Sigmoid colon (tissue), 7 donors: ENCODE measurements at regions of chr2 and their contacts with region 1.

Region 1: DNA sequence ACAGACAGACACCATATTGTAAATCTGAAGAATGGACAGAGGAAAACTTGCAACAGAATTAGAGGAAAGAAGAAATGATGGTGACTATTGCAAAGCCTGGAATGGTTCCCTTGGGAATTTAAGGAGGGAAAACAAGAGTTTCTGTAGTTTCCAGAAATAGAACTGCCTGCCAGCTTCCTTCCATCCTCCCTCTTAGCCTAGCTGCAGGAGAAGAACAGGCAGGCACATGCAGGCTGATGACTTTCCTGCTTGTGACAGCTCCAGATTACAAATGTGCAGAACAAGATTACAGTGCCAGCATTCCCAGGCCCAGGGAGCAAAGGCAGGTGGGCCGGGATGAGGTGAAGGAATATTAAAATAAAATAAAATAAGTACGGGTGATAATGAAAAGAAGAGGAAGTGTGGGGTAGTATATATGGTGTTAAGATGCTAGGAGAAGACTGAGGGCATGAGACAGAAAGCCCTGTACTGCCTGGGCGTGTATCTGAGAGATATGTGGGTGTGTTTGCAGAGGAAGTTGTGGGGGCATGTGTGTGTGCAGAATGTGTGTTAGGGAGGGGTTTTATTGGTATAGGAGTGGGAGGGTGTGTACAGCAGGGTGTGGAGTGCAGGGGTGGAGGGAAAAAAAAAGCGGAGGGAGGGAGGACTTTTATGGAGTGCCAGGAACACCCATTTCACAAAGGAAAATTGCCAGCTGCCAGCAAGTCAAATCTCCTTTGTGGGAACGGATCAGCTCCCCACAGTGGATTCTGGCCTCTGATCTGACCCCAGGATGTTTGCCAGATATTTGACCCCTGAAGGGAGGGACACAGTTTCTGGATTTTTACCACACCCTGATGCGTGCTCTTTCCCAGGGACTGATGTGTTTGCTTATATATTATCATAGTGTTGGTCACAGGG is 43.9 kb upstream of the NEMP2 start:
- DNase-seq: no peak
- H3K4me3 ChIP-seq: no peak overlapping the region
- H3K27ac ChIP-seq: peak overlapping the region; percentile 34 to 75 (median 45)
- H3K4me1 ChIP-seq: peaks cover 0 to 58% (median 42%) of the 10 kb centered on the region in 4 donors
- H3K27me3 ChIP-seq: no peaks in the 10 kb centered on the region
- CTCF ChIP-seq: no peak
- EP300 ChIP-seq: no peak
- POLR2A ChIP-seq: no peak

Region 2: GRCh38 chr2:190511104-190511503 is 67.3 kb before region 1 on chr2:
- intact Hi-C with region 1: no loop called
- DNase-seq: no peak
- H3K4me3 ChIP-seq: no peak overlapping the region
- H3K27ac ChIP-seq: no peak overlapping the region
- H3K4me1 ChIP-seq: peaks cover 0 to 11% (median 0%) of the 10 kb centered on the region in 4 donors
- H3K27me3 ChIP-seq: no peaks in the 10 kb centered on the region
- CTCF ChIP-seq: peak; percentile 5 to 63 (median 39)
- EP300 ChIP-seq: no peak
- POLR2A ChIP-seq: no peak

Region 3: DNA sequence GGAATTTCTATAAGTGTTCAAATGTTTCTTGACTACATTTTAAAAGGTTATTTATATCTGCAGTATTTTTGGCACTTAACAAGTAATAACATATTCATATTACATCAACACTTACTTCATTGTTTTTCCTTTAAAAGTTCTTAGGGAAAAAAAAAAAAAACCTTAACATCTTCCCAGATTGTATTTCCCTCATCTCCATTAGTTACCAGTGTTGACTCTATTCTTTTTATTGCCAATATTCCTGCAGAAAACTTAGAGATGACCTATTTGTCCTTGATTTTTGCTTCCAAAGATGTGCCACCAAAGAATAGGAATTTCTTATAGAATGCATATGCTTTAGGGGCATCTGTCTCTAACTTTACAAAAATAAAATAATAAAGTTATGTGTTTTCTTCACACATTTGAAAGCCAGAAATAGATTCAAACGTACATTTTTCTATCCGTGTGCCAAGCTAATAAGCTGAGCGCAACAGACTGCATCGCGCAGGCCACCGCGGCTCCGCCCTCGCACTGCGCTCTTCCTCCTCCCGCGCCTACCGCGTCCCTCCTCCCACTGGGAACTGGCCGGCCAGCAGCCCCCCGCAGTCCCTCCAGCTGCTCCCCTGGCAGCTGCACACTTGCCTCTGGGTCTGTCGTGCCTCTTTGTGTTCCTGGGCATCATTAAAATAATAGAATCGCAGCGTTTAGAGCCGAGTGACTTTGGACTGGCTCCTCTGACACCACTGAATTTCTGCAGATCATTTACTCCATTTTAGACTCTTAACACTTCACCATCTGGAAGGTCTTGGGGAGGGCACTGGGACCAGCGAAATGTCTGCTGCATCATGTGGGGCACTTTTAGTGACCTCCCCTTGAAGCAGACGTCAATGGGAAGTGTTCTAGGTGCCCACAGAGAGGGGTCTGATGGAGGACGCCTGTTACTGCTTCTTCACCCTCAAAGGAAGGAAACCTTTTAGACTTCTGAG is 49.3 kb after region 1 on chr2:
- intact Hi-C with region 1: loop called (anchors 5 kb)
- DNase-seq: no peak
- H3K4me3 ChIP-seq: peak overlapping the region; percentile 25 to 50 (median 46)
- H3K27ac ChIP-seq: peak overlapping the region; percentile 57 to 83 (median 64)
- H3K4me1 ChIP-seq: peaks cover 0 to 17% (median 15%) of the 10 kb centered on the region in 4 donors
- H3K27me3 ChIP-seq: no peaks in the 10 kb centered on the region
- CTCF ChIP-seq: no peak
- EP300 ChIP-seq: no peak
- POLR2A ChIP-seq: no peak